ENCODE measurements at regions of chr10 and their contacts with region 1.

Region 1: DNA sequence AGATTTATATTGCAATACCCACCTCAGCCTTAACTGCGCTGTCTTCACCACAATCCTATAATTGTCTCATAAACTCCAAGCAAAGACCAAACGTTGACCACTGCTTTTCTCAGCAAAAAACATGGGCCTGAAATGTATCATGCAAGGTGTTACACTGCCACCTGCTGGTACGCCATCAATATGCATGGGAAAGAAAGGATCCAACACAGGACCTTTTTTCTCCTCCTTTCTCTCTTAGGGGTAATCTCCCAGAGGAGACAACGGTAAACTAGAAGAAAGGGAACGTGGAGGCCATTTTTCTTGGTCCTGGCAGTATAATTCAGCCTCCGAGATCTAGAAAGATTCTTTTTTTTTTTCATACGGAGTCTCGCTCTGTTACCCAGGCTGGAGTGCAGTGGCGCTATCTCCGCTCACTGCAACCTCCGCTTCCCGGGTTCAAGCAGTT is 79.1 kb upstream of the MPP7 start:
- DNase-seq: peak in 9 of 10 donors; percentile 32 to 87 (median 75)

Region 2: DNA sequence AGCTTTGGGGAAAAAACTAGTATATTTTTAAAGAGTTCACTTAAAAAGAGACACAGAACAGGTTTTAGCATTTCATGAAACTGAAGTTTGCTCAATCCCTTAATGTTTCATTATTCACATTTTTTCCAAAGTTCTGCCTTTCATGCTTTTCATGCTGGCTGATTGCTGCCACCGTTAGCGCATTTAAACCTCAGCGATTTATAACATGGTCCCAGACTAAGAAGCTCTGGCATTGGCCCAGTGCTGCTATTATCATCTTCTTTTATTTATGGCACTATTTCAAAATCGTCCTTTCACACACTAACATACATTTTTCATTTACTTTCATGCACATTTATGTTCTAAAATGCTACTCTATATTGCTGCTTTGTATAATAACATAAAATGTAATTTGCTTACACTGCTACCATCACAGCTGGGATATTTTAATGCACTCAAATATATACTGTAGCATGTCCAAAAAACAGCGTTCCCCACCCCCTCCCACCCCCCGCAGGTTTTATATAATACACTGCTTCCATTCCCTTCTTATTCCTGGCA is 221.0 kb before region 1 on chr10:
- intact Hi-C with region 1: no loop called
- DNase-seq: no peak

Region 3: GRCh38 chr10:28250782-28251181 is 131.1 kb before region 1 on chr10:
- intact Hi-C with region 1: loop called (anchors 1 kb)
- DNase-seq: no peak